GM12878 (cell line): ENCODE measurements at regions of chr11 and their contacts with region 1.

Region 1: DNA sequence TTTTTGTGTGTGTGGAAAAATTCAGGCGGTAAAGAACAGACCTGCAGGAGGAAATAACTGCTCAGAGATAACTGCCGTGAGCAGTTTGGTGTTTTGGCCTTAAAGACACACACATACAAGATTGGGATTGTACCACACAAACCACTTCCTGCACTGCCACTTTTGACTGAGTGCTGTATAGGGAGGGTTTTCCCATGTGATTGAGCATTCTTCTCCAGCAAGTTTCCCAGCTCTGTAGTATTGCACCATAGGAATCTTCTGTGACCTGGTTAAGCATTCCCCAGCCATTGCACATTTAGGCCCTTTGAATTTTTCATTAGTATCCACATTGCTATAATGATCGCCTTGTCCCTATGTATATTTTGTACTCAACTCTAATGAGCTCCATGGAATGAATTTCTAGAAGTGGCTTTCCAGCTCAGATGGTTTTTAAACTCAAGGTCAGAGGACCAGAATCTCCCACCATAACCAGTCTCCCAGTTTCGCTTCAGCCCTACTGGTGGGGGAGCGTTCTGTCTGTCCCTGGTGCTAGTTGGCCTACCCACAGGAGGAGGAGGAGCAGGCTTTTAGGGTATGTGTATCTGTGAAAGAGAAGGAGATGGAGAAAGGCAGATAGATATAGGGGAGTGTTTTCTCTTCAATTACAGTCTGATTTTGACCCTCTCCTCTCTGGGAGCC is 9.3 kb downstream of the CD82 start:
- DNase-seq: peak; percentile 66
- ATAC-seq: peak; percentile 66
- H3K4me3 ChIP-seq: peak overlapping the region; percentile 38; the same call in 1 of the 2 replicates
- H3K27ac ChIP-seq: peak overlapping the region; percentile 88
- H3K4me1 ChIP-seq: peaks cover 63% of the 10 kb centered on the region
- H3K27me3 ChIP-seq: no peaks in the 10 kb centered on the region
- CTCF ChIP-seq: no peak
- EP300 ChIP-seq: peak; percentile 23 to 37; a peak in 1 of 4 replicates
- POLR2A ChIP-seq: no peak
- RAD21 ChIP-seq: no peak

Region 2: DNA sequence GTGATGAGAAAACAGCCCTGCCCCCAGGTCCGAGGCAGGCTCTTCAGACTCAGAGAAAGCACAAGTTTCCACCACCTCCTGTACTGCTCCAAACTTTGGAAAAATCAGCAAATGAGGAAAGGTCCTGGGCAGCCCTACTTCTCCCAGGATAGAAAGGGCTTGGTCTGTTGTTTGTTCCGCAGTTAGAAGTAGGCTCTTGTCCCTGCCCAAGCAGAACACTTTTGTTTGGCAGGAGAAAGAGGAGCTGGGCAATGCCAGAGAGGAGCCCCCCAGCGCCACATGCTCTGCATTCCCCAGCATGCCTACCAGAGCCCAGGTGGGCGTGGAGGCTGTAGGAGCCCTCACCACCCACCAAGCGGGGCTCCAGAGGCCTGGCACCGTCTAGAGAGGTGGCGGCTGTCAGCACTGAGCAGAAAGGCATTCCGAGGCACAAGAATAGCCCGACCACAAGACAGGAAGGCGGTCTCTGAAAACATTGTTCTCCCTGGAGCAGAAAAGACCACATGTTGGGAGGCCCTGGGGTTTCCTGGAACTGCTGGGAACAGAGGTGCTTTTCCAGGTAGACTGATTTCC is 99.5 kb before region 1 on chr11:
- CTCF ChIA-PET with region 1: no interaction called
- POLR2A ChIA-PET with region 1: no interaction called
- RAD21 ChIA-PET with region 1: no interaction called
- SMC1A ChIA-PET with region 1: no interaction called
- in situ Hi-C with region 1: no loop called
- intact Hi-C with region 1: no loop called
- DNase-seq: no peak
- ATAC-seq: no peak
- H3K4me3 ChIP-seq: no peak overlapping the region
- H3K27ac ChIP-seq: no peak overlapping the region
- H3K4me1 ChIP-seq: no peaks in the 10 kb centered on the region
- H3K27me3 ChIP-seq: peaks cover 2 to 4% of the 10 kb centered on the region in 2 experiments; a peak in 2 of 4 replicates
- CTCF ChIP-seq: no peak
- EP300 ChIP-seq: no peak
- POLR2A ChIP-seq: no peak
- RAD21 ChIP-seq: no peak

Region 3: GRCh38 chr11:44596525-44597276 is 22.0 kb after region 1 on chr11:
- CTCF ChIA-PET with region 1: interaction called, 15 read pairs
- POLR2A ChIA-PET with region 1: interaction called, 434 read pairs
- RAD21 ChIA-PET with region 1: interaction called, 84 read pairs
- SMC1A ChIA-PET with region 1: interaction called, 60 read pairs
- in situ Hi-C with region 1: no loop called
- intact Hi-C with region 1: loop called (anchors 1 kb)
- DNase-seq: peak; percentile 84
- ATAC-seq: peak; percentile 73
- H3K4me3 ChIP-seq: peak overlapping the region; percentile 49; the same call in 1 of the 2 replicates
- H3K27ac ChIP-seq: peak overlapping the region; percentile 91
- H3K4me1 ChIP-seq: peaks cover 71% of the 10 kb centered on the region
- H3K27me3 ChIP-seq: no peaks in the 10 kb centered on the region
- CTCF ChIP-seq: no peak
- EP300 ChIP-seq: no peak
- POLR2A ChIP-seq: peak; percentile 63; the same call in 1 of the 2 replicates
- RAD21 ChIP-seq: no peak

Region 4: DNA sequence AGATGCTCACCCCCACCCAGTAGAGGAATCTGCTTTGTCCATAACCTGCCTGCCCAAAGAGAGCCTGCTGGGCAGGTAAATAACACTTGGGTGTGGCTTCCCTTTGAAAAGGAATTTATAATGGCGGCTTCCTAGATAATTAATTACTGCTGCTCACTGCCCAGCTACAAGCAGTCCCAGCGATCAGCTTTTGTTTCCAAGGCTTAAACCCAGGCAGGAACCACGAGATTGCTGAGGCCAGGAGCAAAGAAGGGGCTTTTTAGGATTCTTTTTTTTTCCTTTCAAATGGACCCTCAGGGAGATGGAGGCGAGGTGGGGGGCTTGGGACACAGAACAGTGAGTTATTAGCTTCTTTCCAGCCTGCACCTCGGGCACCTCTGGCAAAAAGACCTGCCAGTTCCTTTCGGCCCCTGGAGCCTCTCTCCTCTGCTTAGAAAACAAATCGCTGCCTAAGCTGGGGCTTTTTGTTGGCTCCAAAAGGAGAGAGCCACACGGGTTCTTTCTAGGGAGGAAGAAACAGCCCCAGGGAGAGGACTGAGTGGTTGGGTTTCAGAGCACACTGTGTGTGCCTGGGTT is 259.2 kb after region 1 on chr11:
- CTCF ChIA-PET with region 1: no interaction called
- POLR2A ChIA-PET with region 1: no interaction called
- RAD21 ChIA-PET with region 1: no interaction called
- SMC1A ChIA-PET with region 1: no interaction called
- in situ Hi-C with region 1: no loop called
- intact Hi-C with region 1: no loop called
- DNase-seq: no peak
- ATAC-seq: no peak
- H3K4me3 ChIP-seq: no peak overlapping the region
- H3K27ac ChIP-seq: no peak overlapping the region
- H3K4me1 ChIP-seq: no peaks in the 10 kb centered on the region
- H3K27me3 ChIP-seq: peaks cover 0 to 8% of the 10 kb centered on the region in 2 experiments; a peak in 2 of 4 replicates
- CTCF ChIP-seq: no peak
- EP300 ChIP-seq: no peak
- POLR2A ChIP-seq: no peak
- RAD21 ChIP-seq: no peak

Region 5: GRCh38 chr11:44927174-44927661 is 352.5 kb after region 1 on chr11:
- CTCF ChIA-PET with region 1: no interaction called
- POLR2A ChIA-PET with region 1: no interaction called
- RAD21 ChIA-PET with region 1: no interaction called
- SMC1A ChIA-PET with region 1: no interaction called
- in situ Hi-C with region 1: no loop called
- intact Hi-C with region 1: no loop called
- DNase-seq: no peak
- ATAC-seq: peak; percentile 91
- H3K4me3 ChIP-seq: no peak overlapping the region
- H3K27ac ChIP-seq: no peak overlapping the region
- H3K4me1 ChIP-seq: no peaks in the 10 kb centered on the region
- H3K27me3 ChIP-seq: peaks cover 0 to 1% of the 10 kb centered on the region in 2 experiments; a peak in 2 of 4 replicates
- CTCF ChIP-seq: peak; percentile 77 to 83 (median 83)
- EP300 ChIP-seq: no peak
- POLR2A ChIP-seq: no peak
- RAD21 ChIP-seq: peak; percentile 59